Heart right ventricle (tissue), 16 donors: ENCODE measurements at regions of chr18 and their contacts with region 1.

Region 1: GRCh38 chr18:48663931-48664847 is 125.4 kb downstream of the CTIF start:
- DNase-seq: peak; percentile 68 to 76
- ATAC-seq: peak; percentile 34 to 78 (median 66)
- H3K4me3 ChIP-seq: no peak overlapping the region
- H3K27ac ChIP-seq: no peak overlapping the region
- H3K4me1 ChIP-seq: peaks cover 0 to 39% (median 24%) of the 10 kb centered on the region in 9 donors
- H3K27me3 ChIP-seq: no peaks in the 10 kb centered on the region
- CTCF ChIP-seq: peak; percentile 84 to 93 (median 88)

Region 2: DNA sequence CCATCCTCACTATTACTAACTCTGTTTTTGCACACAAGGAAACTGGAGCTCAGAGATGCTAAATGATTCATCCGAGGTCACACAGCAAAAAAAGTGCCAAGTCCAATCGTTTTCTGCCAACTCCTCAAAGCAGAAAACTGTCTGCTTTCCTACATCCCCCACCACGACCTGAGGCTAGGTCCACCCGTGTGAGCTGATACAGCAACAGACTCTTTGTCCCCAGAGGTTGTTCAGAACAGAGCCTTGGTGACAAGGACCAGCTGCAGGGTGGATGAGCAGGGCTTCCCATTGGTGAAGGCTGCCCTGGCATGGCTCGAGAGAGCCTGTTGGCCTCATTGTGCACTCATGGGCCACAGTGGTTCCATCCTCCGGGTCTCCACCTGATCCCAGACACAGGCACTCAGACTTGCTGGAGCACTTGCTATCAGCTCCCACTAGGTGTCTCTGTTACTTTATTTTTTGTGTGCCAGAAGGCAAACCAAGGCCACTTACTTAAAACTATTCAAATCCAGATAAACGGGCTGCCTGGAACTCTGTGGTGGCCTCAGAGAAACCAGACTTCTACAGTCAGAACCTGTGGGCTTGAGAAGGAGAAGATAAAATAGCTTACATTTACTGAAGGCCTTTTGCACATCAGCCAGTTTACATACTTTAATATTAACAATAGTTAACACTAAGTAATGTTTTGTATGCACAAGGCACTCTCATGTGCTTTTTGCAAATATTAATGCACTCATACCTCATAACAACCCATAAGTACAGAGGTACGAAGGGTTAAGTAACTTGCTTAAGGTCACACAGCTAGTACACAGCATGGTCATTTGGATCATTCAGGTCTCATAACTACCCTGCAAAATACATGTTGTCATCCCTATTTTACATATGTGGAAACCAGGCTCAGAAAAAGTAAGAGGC is 188.3 kb before region 1 on chr18:
- intact Hi-C with region 1: loop called (anchors 1 to 5 kb)
- DNase-seq: peak in 1 of 2 donors; percentile 66
- ATAC-seq: peak; percentile 69 to 94 (median 90)
- H3K4me3 ChIP-seq: no peak overlapping the region
- H3K27ac ChIP-seq: no peak overlapping the region
- H3K4me1 ChIP-seq: peaks cover 0 to 12% (median 5%) of the 10 kb centered on the region in 9 donors
- H3K27me3 ChIP-seq: no peaks in the 10 kb centered on the region
- CTCF ChIP-seq: peak; percentile 62 to 91 (median 85)

Region 3: GRCh38 chr18:48728204-48728833 is 64.1 kb after region 1 on chr18:
- intact Hi-C with region 1: no loop called
- DNase-seq: no peak
- ATAC-seq: peak in 6 of 8 donors; percentile 4 to 75 (median 58)
- H3K4me3 ChIP-seq: no peak overlapping the region
- H3K27ac ChIP-seq: peak overlapping the region in 6 of 10 donors; percentile 25 to 77 (median 57)
- H3K4me1 ChIP-seq: peaks cover 2 to 39% (median 23%) of the 10 kb centered on the region in 9 donors
- H3K27me3 ChIP-seq: no peaks in the 10 kb centered on the region
- CTCF ChIP-seq: no peak

Region 4: DNA sequence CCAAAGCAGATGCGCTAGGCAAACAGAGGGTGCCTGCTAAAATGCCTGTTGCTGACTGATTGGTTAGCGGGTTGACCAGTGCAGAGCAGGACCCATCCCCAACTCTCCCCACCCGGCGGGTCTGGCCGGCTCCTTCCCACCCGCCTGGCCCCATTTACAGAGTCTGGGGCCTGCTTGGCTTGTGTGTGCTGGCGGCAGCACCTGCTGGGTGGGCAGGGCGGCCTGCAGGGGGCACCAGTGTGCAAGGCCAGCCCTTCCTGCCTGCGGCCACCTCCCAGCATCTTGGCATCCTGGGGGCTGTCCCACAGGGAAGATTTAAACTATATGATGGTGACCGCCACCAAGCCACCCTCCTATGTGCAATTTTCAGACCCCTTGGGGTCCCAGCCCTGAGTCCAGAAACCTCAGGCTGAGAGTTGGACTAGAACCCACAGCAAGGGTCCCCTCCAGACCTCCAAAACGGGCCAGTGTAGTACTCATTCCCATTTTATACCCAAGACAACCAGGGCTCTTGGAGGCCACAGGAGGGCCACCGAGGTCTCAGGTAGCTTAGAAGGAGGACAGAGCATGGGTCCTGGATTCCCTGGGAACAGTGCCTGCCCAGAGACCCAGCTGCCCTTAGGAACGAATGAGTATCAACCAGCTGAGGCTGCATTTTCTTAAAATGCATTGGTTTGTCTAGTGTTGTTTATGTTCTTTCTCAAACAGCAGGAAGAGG is 113.0 kb after region 1 on chr18:
- intact Hi-C with region 1: no loop called
- DNase-seq: peak in 1 of 2 donors; percentile 72
- ATAC-seq: peak in 6 of 8 donors; percentile 5 to 27 (median 18)
- H3K4me3 ChIP-seq: no peak overlapping the region
- H3K27ac ChIP-seq: peak overlapping the region in 4 of 10 donors; percentile 27 to 99 (median 60)
- H3K4me1 ChIP-seq: peaks cover 43 to 88% (median 70%) of the 10 kb centered on the region in 9 donors
- H3K27me3 ChIP-seq: no peaks in the 10 kb centered on the region
- CTCF ChIP-seq: peak; percentile 82 to 96 (median 90)